Activated CD8-positive, alpha-beta memory T cell treated with anti-CD3 and anti-CD28 coated beads, Interleukin-2, amount 10 ng/mL, durations not matched to agents 7 days and 5 days (primary cell): ENCODE measurements at regions of chr13 and their contacts with region 1.

Region 1: DNA sequence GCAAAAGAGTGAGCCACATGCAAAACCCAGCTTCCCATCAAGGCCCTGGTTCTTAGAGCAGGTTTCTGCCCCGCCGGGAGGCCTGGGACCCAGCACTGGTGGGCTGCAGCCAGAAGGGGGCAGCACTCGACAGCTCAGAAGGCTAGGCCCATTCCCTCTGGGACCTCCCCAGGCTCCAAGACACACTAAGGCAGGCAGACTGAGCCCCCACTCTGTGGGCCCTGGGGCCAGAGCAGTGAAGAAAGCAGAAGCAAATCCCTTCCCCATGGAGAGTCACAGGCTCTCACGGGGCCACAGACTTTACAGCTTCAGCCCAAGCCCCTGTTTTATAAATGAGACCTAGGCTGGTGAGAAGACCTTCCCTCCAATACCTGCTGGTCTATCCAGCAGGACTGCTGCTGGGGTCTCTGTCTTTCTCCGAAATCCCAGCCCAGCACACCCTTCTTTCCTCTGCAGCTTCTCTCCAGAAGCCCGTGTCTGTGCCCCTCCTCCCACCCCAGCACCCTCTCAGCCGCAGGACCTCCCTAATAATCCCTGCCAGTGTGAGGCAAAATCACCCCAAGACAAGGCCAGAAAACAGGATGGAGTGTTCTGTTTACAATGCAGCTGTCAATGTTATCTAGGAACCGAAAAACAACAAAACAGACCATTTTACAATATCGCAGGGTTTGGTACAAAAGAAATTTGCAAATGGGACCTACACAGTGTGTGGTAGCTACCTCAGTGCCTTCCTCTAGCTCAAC is 109.3 kb downstream of the ABCC4 start:
- DNase-seq: peak; percentile 74
- ATAC-seq: peak; percentile 89
- H3K4me3 Mint-ChIP-seq: no peak overlapping the region
- H3K27ac Mint-ChIP-seq: no peak overlapping the region
- H3K4me1 Mint-ChIP-seq: peaks cover 8% of the 10 kb centered on the region
- H3K27me3 Mint-ChIP-seq: no peaks in the 10 kb centered on the region

Region 2: GRCh38 chr13:95226932-95227695 is 35.1 kb after region 1 on chr13:
- CTCF ChIA-PET with region 1: interaction called, 13 read pairs
- DNase-seq: no peak
- ATAC-seq: peak; percentile 93
- H3K4me3 Mint-ChIP-seq: no peak overlapping the region
- H3K27ac Mint-ChIP-seq: peak overlapping the region; percentile 55
- H3K4me1 Mint-ChIP-seq: peaks cover 21% of the 10 kb centered on the region
- H3K27me3 Mint-ChIP-seq: no peaks in the 10 kb centered on the region

Region 3: DNA sequence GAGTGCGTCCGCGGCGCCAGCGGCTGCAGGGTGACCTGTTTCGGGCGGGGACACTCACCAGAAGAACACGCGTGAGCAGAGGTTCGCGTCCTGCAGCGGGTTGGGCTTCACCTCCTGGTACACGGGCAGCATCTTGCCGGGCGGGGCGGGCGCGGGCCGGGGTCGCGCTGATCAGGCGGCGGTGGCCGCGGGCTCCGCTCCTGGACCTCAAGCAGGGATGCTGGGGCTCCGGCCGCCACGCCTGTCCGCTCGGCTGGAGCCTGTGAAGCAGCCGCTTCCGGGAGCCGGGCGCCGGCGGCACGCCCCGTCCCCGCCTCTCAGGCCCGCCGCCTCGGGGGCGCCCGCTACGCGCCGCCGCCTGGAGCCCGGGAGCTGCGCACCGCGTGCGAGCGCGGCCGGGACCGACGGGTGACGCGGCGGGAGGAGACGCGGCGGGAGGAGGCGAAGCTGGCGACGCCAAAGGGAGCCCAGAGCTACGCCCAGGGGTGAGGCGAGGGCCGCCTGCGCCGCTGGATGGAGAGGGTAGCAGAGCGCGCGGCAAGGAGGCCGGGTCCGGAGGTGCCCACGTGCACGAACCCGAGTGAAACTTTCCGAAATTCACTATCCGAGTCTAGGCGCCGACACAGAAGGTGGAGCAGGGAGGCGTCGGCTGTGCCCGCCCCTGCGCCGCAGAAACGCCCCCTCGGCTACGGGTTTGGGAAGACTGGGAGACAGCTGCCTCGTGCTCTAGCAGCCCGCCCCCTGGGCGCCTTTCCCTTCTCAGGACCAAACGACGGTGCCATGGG is 109.4 kb after region 1 on chr13 and contains the start of gene ABCC4:
- CTCF ChIA-PET with region 1: interaction called, 38 read pairs
- DNase-seq: peak; percentile 66
- ATAC-seq: peak; percentile 95
- H3K4me3 Mint-ChIP-seq: peak within 1 kb of the TSS; percentile 84
- H3K27ac Mint-ChIP-seq: no peak within 1 kb of the TSS
- H3K4me1 Mint-ChIP-seq: peaks cover 22% of the 10 kb centered on the region
- H3K27me3 Mint-ChIP-seq: peaks cover 12% of the 10 kb centered on the region
- total RNA-seq, gene ABCC4: 6.4 to 7.7 TPM

Region 4: DNA sequence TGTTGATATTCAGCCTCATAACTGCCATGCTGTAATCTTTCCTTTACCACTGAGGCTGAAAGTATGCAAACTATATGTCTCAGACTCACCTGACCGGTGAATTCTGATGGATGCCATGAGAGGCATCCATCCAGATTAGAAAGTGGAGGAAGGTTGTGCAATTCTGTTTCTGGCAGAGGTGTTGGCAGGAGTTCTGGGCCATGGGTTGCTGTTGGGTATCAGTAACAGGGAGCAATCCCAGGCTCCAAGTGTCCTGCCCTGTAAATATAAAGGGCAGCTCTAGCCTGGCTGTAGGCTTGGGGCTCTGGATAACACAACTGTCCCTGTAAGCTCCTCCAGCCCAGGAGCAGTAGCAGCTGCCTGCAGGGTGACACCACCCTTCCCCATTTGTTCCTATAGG is 186.6 kb after region 1 on chr13:
- CTCF ChIA-PET with region 1: interaction called, 149 read pairs
- DNase-seq: no peak
- ATAC-seq: no peak
- H3K4me3 Mint-ChIP-seq: no peak overlapping the region
- H3K27ac Mint-ChIP-seq: no peak overlapping the region
- H3K4me1 Mint-ChIP-seq: peaks cover 4% of the 10 kb centered on the region
- H3K27me3 Mint-ChIP-seq: peaks cover 7% of the 10 kb centered on the region